ENCODE measurements at regions of chr17 and their contacts with region 1.

Region 1: DNA sequence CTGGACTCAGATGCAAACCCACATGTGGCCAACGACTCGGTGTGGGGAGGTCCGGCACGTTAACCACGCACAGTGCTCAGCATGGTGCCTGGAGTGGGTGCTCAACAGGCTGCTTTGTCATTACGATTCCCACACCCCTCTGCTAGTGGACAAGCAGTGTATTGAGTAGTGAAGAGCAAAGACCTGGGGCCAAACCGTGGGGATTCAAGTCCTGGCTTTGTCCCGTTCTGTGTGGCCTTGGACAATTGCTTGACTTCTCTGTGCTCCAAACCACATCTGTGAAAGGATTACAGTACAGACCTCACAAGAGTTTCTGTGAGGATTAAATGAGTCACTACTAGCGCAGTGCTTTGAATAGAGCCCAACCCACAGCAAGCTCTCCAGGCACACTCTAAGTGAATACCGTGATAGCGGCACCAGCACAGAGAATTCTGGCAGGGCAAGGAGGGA is 33.8 kb downstream of the TRPV2 start:
- DNase-seq: peak; percentile 50
- ATAC-seq: no peak
- H3K4me3 ChIP-seq: no peak overlapping the region
- H3K27ac ChIP-seq: no peak overlapping the region
- H3K4me1 ChIP-seq: no peaks in the 10 kb centered on the region
- H3K27me3 ChIP-seq: no peaks in the 10 kb centered on the region
- CTCF ChIP-seq: no peak

Region 2: DNA sequence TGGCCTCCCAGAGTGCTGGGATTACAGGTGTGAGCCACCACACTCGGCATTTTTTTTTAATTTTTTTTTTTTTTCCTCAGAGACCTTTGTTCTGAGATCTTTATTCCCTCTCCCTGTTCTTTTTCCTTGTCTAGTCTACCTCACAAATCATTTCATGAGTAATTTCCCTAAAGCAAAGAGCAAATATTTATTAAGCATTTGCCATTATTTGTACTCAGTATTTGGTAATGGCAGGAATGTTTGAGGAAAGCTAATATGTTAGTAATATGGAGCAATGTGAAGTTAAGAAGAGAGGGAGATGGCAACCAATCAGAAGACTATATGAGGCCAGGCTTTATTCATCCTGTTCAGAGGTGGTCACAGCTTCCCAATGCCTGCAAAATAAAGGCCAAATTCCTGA is 109.2 kb before region 1 on chr17:
- CTCF ChIA-PET with region 1: no interaction called
- POLR2A ChIA-PET with region 1: interaction called, 35 read pairs
- intact Hi-C with region 1: no loop called
- DNase-seq: peak; percentile 86
- ATAC-seq: peak; percentile 89
- H3K4me3 ChIP-seq: no peak overlapping the region
- H3K27ac ChIP-seq: peak overlapping the region; percentile 49
- H3K4me1 ChIP-seq: peaks cover 8% of the 10 kb centered on the region; the same call in 1 of the 2 replicates
- H3K27me3 ChIP-seq: no peaks in the 10 kb centered on the region
- CTCF ChIP-seq: no peak

Region 3: GRCh38 chr17:16364625-16365024 is 84.5 kb before region 1 on chr17:
- CTCF ChIA-PET with region 1: no interaction called
- POLR2A ChIA-PET with region 1: no interaction called
- intact Hi-C with region 1: no loop called
- DNase-seq: no peak
- ATAC-seq: no peak
- H3K4me3 ChIP-seq: no peak overlapping the region
- H3K27ac ChIP-seq: no peak overlapping the region
- H3K4me1 ChIP-seq: 0 out of 2 replicates have a peak, but pooled peaks cover 3% of the 10 kb centered on the region
- H3K27me3 ChIP-seq: no peaks in the 10 kb centered on the region
- CTCF ChIP-seq: no peak

Region 4: GRCh38 chr17:16551878-16552636 is 102.9 kb after region 1 on chr17:
- CTCF ChIA-PET with region 1: no interaction called
- POLR2A ChIA-PET with region 1: no interaction called
- intact Hi-C with region 1: no loop called
- DNase-seq: no peak
- ATAC-seq: no peak
- H3K4me3 ChIP-seq: no peak overlapping the region
- H3K27ac ChIP-seq: no peak overlapping the region
- H3K4me1 ChIP-seq: no peaks in the 10 kb centered on the region
- H3K27me3 ChIP-seq: no peaks in the 10 kb centered on the region
- CTCF ChIP-seq: no peak

Measured in PC-3 (cell line).